ENCODE measurements at regions of chr9 and their contacts with region 1.

Region 1: GRCh38 chr9:129726322-129727160 is 26.3 kb downstream of the PTGES start:
- DNase-seq: peak; percentile 12
- H3K4me3 ChIP-seq: no peak overlapping the region
- CTCF ChIP-seq: peak; percentile 90

Region 2: GRCh38 chr9:129641746-129642513 is 84.6 kb before region 1 on chr9 and contains the start of gene ASB6:
- CTCF ChIA-PET with region 1: interaction called, 48 read pairs
- POLR2A ChIA-PET with region 1: no interaction called
- DNase-seq: peak; percentile 69
- H3K4me3 ChIP-seq: peak within 1 kb of the TSS; percentile 87
- CTCF ChIP-seq: peak; percentile 89

Region 3: DNA sequence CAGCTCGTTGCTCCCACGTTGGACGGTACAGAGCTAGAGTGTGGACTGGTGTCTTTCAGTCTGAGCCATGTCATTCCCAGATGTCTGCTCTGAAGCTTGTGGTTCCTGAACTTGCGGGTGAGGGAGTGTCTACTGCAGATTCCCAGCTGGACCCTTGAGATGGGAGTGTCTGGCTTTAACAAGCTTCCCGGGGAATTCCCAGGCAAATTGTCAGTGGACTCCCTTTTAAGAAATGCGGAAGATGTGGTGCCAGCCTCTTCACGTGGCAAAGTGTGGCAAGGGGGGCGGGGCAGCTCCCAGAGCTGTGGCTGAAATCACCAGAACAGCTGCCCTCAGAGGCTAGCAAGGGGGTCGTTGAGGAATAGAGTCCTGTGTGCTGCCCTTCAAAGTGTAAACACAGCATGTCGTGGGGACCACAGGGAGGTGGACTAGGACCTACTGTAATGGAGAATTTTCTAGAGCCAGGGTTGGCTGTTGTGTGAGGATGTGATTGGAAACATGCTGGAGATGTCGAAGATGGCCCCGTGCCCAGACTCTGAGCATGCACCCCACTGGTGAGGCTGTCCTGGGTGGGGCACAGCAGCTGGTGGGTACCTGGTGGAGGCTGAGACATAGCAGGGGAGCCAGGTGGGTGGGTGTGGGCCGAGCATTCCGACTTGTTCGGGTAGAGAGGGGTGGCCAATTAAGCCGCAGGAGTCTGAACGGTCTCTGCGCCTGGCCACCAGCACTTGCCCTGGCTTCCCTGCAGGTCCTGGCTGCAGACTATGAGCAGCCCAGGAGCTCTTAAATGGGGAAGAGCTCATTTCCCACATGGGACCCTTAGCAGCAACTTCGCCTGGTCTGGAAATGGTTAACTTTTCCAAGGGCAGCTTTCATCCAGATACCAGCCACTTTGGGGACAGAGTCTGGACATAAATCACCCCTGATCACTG is 23.7 kb before region 1 on chr9:
- CTCF ChIA-PET with region 1: interaction called, 21 read pairs
- POLR2A ChIA-PET with region 1: no interaction called
- DNase-seq: peak; percentile 91
- H3K4me3 ChIP-seq: no peak overlapping the region
- CTCF ChIP-seq: no peak

Region 4: GRCh38 chr9:129712634-129713401 is 13.7 kb before region 1 on chr9:
- CTCF ChIA-PET with region 1: interaction called, 57 read pairs
- POLR2A ChIA-PET with region 1: no interaction called
- DNase-seq: peak; percentile 76
- H3K4me3 ChIP-seq: peak overlapping the region; percentile 2; the same call in 1 of the 2 replicates
- CTCF ChIP-seq: peak; percentile 1

Region 5: DNA sequence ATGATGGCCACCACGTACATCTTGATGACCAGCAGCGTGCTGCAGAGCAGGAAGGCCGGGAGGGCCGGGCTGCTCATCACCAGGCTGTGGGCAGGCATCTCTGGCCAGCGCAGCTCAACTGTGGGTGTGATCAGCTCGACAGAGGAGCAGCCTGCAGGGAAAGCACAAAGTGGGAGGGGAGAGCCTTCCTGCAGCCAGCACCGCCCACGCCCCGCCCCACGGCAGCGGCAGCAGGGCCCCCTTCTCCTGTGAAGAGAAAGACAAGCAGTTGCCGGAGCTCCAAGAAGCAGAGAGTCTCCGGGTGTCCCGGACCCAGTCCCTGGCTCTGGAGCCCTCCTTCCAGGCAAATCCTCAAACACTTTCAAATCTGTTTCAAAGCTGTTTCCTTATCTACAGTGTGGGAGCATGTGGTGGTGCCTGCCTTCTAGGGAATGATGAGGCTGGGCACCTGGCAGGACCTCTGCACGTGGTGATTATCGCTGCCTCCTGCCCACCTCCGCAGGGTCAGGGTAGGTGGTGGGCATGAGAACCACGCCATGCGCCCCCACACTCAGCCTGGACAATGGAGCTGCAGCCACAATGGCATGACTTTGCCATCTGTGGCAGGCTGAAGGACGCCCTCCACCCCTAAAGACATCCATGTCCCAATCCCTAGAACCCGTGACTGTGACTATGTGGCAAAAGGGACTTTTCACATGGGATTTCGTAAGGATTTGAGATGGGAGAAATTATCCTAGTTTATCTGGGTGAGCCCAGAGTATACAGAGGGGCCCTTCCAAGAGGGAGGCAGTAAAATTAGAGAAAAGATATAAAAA is 26.6 kb after region 1 on chr9 and contains the start of gene PTGES:
- CTCF ChIA-PET with region 1: interaction called, 32 read pairs
- POLR2A ChIA-PET with region 1: no interaction called
- DNase-seq: no peak
- H3K4me3 ChIP-seq: peak within 1 kb of the TSS; percentile 63
- CTCF ChIP-seq: no peak

Region 6: DNA sequence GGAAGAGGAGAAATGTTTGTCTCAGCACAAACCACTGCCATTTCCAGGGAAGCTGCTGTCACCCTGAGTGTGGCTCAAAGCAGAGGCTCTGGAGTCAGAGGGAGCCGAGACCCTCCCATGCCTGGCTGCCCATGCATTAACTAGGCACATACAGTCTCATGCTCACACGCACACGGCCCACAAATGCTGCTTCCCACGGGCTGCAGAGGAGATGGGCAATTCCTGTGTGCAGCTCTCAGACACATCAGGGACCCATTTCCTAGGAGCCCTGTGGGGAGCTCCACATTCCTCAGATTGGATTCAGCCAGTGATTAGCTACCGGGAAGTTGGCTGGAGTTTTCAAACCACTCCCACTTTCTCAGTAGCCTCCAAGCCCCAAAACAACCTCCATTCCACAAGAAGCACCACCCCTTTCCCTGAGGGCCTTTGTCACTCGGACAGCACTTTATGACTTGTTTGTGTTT is 35.4 kb after region 1 on chr9:
- CTCF ChIA-PET with region 1: interaction called, 15 read pairs
- POLR2A ChIA-PET with region 1: no interaction called
- DNase-seq: no peak
- H3K4me3 ChIP-seq: no peak overlapping the region
- CTCF ChIP-seq: no peak

Region 7: GRCh38 chr9:129783516-129784361 is 57.2 kb after region 1 on chr9:
- CTCF ChIA-PET with region 1: interaction called, 238 read pairs
- POLR2A ChIA-PET with region 1: no interaction called
- DNase-seq: no peak
- H3K4me3 ChIP-seq: no peak overlapping the region
- CTCF ChIP-seq: peak; percentile 84